Upper lobe of right lung (tissue), 1 donor: ENCODE measurements at regions of chr1 and their contacts with region 1.

Region 1: GRCh38 chr1:39919545-39919944 is 17.8 kb upstream of the MYCL start:
- DNase-seq: peak; percentile 77
- ATAC-seq: peak; percentile 98
- H3K4me3 ChIP-seq: no peak overlapping the region
- H3K27ac ChIP-seq: no peak overlapping the region
- H3K4me1 ChIP-seq: no peaks in the 10 kb centered on the region
- H3K27me3 ChIP-seq: no peaks in the 10 kb centered on the region
- CTCF ChIP-seq: peak; percentile 57

Region 2: GRCh38 chr1:39876144-39876543 is 43.4 kb before region 1 on chr1:
- intact Hi-C with region 1: no loop called
- DNase-seq: no peak
- ATAC-seq: peak; percentile 42
- H3K4me3 ChIP-seq: no peak overlapping the region
- H3K27ac ChIP-seq: no peak overlapping the region
- H3K4me1 ChIP-seq: peaks cover 14% of the 10 kb centered on the region
- H3K27me3 ChIP-seq: no peaks in the 10 kb centered on the region
- CTCF ChIP-seq: no peak

Region 3: DNA sequence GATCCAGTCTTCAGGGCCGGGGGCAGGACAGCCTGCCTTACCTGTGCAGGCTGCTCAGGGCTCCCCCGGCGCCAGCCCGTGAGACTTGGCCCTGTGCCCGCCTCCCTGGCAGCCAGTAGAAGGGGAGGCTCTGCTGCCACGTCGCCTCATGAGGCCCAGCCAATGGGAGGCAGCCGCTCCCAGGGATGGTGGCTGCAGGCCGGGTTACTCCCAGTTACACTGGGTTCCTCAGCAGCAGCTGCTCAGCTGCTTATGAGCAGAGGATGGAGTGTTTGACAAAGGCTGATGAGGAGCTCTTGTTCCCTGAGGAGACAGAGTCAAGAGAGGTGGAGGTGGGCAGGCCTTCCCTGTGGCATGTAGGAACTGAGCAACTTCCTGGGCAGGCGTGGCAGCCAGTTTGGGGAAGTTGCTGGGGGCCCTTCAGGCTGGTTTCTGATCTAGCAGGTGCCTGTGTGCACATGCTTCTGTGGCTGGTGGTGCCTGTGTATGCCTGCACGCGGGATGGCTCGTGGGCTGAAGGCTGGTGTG is 41.0 kb after region 1 on chr1:
- intact Hi-C with region 1: loop called (anchors 10 kb)
- DNase-seq: peak; percentile 96
- ATAC-seq: peak; percentile 90
- H3K4me3 ChIP-seq: peak overlapping the region; percentile 23
- H3K27ac ChIP-seq: peak overlapping the region; percentile 72
- H3K4me1 ChIP-seq: peaks cover 30% of the 10 kb centered on the region
- H3K27me3 ChIP-seq: no peaks in the 10 kb centered on the region
- CTCF ChIP-seq: no peak

Region 4: GRCh38 chr1:40014253-40014714 is 94.7 kb after region 1 on chr1:
- intact Hi-C with region 1: no loop called
- DNase-seq: no peak
- ATAC-seq: no peak
- H3K4me3 ChIP-seq: no peak overlapping the region
- H3K27ac ChIP-seq: no peak overlapping the region
- H3K4me1 ChIP-seq: no peaks in the 10 kb centered on the region
- H3K27me3 ChIP-seq: no peaks in the 10 kb centered on the region
- CTCF ChIP-seq: no peak

Region 5: GRCh38 chr1:40107290-40108262 is 188.0 kb after region 1 on chr1:
- intact Hi-C with region 1: no loop called
- DNase-seq: no peak
- ATAC-seq: peak; percentile 79
- H3K4me3 ChIP-seq: no peak overlapping the region
- H3K27ac ChIP-seq: no peak overlapping the region
- H3K4me1 ChIP-seq: no peaks in the 10 kb centered on the region
- H3K27me3 ChIP-seq: peaks cover 3% of the 10 kb centered on the region
- CTCF ChIP-seq: no peak